ENCODE measurements at regions of chr18 and their contacts with region 1.

Region 1: GRCh38 chr18:58135701-58136331 is 91.8 kb downstream of the NEDD4L start:
- DNase-seq: peak; percentile 77
- ATAC-seq: peak; percentile 78
- H3K4me3 ChIP-seq: no peak overlapping the region
- H3K27ac ChIP-seq: no peak overlapping the region
- H3K4me1 ChIP-seq: peaks cover 21% of the 10 kb centered on the region
- H3K27me3 ChIP-seq: no peaks in the 10 kb centered on the region
- CTCF ChIP-seq: peak; percentile 91

Region 2: GRCh38 chr18:58180738-58181353 is 45.0 kb after region 1 on chr18:
- CTCF ChIA-PET with region 1: no interaction called
- POLR2A ChIA-PET with region 1: interaction called, 3 read pairs
- intact Hi-C with region 1: loop called (anchors 1 kb)
- DNase-seq: peak; percentile 72
- ATAC-seq: no peak
- H3K4me3 ChIP-seq: no peak overlapping the region
- H3K27ac ChIP-seq: no peak overlapping the region
- H3K4me1 ChIP-seq: peaks cover 38% of the 10 kb centered on the region
- H3K27me3 ChIP-seq: no peaks in the 10 kb centered on the region
- CTCF ChIP-seq: peak; percentile 94

Measured in PC-3 (cell line).